Spleen (tissue), 13 donors: ENCODE measurements at regions of chr1 and their contacts with region 1.

Region 1: GRCh38 chr1:153352523-153352922 is 3.9 kb upstream of the PGLYRP4 start:
- DNase-seq: peak; percentile 88
- H3K4me3 ChIP-seq: no peak overlapping the region
- H3K27ac ChIP-seq: no peak overlapping the region
- H3K4me1 ChIP-seq: peaks cover 2 to 45% (median 8%) of the 10 kb centered on the region in 6 donors
- H3K27me3 ChIP-seq: peaks cover 0 to 69% (median 11%) of the 10 kb centered on the region in 7 donors
- CTCF ChIP-seq: peak; percentile 78 to 97 (median 91)
- POLR2A ChIP-seq: no peak

Region 2: DNA sequence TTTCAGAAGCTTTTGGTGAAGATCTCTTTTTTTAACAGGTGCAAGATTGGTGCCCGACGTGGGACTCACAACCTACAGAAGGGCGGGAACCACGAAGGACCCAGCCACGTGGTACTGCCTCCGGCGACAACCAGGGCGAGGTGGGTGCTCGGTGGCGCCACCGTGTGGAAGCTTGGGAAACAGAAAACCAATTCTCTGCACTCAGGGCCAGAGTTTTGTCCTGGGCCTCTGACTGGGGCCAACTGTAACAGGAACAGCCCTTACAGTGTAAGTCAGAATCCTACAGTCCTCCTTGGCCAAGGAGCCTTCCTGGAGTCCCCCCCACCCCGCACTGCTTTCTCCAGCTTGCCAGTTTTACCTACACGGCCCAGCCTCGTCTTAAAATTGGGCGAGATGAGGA is 52.2 kb after region 1 on chr1:
- intact Hi-C with region 1: no loop called
- DNase-seq: peak; percentile 92
- H3K4me3 ChIP-seq: no peak overlapping the region
- H3K27ac ChIP-seq: peak overlapping the region in 3 of 8 donors; percentile 71 to 85 (median 76)
- H3K4me1 ChIP-seq: peaks cover 0 to 27% (median 0%) of the 10 kb centered on the region in 6 donors
- H3K27me3 ChIP-seq: peaks cover 0 to 25% (median 10%) of the 10 kb centered on the region in 7 donors
- CTCF ChIP-seq: peak; percentile 23 to 82 (median 59)
- POLR2A ChIP-seq: no peak

Region 3: GRCh38 chr1:153494976-153495535 is 142.5 kb after region 1 on chr1:
- intact Hi-C with region 1: loop called (anchors 5 kb)
- DNase-seq: peak; percentile 92
- H3K4me3 ChIP-seq: no peak overlapping the region
- H3K27ac ChIP-seq: no peak overlapping the region
- H3K4me1 ChIP-seq: peaks cover 0 to 10% (median 5%) of the 10 kb centered on the region in 6 donors
- H3K27me3 ChIP-seq: peaks cover 0 to 25% (median 0%) of the 10 kb centered on the region in 7 donors
- CTCF ChIP-seq: peak; percentile 71 to 96 (median 88)
- POLR2A ChIP-seq: no peak